Activated CD8-positive, alpha-beta T cell treated with anti-CD3 and anti-CD28 coated beads, Interleukin-2, amount 10 ng/mL, durations not matched to agents 7 days and 5 days (primary cell): ENCODE measurements at regions of chr5 and their contacts with region 1.

Region 1: DNA sequence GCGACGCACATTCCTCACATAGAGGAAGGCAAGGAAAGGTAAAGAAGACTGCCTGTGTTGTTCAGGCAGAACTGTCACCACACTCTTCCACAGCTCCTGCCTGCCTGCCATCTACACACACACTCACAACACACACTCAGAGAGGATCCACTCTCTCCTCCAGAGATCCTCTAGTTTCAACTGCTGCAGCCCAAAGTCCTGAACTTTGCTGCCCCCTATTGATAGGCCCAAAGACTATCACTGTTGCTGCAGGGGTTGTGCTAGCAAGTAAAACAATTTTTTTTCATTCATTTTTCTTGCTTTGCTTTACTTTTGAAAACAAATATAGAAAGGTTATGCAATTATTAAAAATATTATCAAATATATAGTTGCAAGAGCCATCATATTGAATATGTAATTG is 5.9 kb upstream of the CFAP90 start:
- DNase-seq: peak; percentile 54
- ATAC-seq: peak; percentile 69
- H3K4me3 Mint-ChIP-seq: no peak overlapping the region
- H3K27ac Mint-ChIP-seq: no peak overlapping the region
- H3K4me1 Mint-ChIP-seq: peaks cover 27% of the 10 kb centered on the region
- H3K27me3 Mint-ChIP-seq: peaks cover 2% of the 10 kb centered on the region

Region 2: GRCh38 chr5:7815892-7816534 is 40.8 kb before region 1 on chr5:
- CTCF ChIA-PET with region 1: interaction called, 11 read pairs
- POLR2A ChIA-PET with region 1: no interaction called
- DNase-seq: peak; percentile 70
- ATAC-seq: peak; percentile 91
- H3K4me3 Mint-ChIP-seq: no peak overlapping the region
- H3K27ac Mint-ChIP-seq: no peak overlapping the region
- H3K4me1 Mint-ChIP-seq: no peaks in the 10 kb centered on the region
- H3K27me3 Mint-ChIP-seq: peaks cover 9% of the 10 kb centered on the region

Region 3: GRCh38 chr5:7868773-7869473 is 12.1 kb after region 1 on chr5 and contains the starts of genes FASTKD3 and MTRR:
- CTCF ChIA-PET with region 1: interaction called, 19 read pairs
- POLR2A ChIA-PET with region 1: interaction called, 11 read pairs
- DNase-seq: peak; percentile 94
- ATAC-seq: peak; percentile 100
- H3K4me3 Mint-ChIP-seq: peak within 1 kb of the TSS; percentile 92
- H3K27ac Mint-ChIP-seq: peak within 1 kb of the TSS; percentile 87
- H3K4me1 Mint-ChIP-seq: peaks cover 63% of the 10 kb centered on the region
- H3K27me3 Mint-ChIP-seq: no peaks in the 10 kb centered on the region
- total RNA-seq, gene FASTKD3: 10.8 to 13.8 TPM
- total RNA-seq, gene MTRR: 39.1 to 49.7 TPM